ENCODE measurements at regions of chr4 and their contacts with region 1.

Region 1: GRCh38 chr4:173192375-173193162 is 24.0 kb downstream of the GALNT7 start:
- DNase-seq: no peak
- H3K4me3 Mint-ChIP-seq: no peak overlapping the region
- H3K27ac Mint-ChIP-seq: peak overlapping the region; percentile 78
- H3K4me1 Mint-ChIP-seq: peaks cover 37% of the 10 kb centered on the region
- H3K27me3 Mint-ChIP-seq: no peaks in the 10 kb centered on the region

Region 2: DNA sequence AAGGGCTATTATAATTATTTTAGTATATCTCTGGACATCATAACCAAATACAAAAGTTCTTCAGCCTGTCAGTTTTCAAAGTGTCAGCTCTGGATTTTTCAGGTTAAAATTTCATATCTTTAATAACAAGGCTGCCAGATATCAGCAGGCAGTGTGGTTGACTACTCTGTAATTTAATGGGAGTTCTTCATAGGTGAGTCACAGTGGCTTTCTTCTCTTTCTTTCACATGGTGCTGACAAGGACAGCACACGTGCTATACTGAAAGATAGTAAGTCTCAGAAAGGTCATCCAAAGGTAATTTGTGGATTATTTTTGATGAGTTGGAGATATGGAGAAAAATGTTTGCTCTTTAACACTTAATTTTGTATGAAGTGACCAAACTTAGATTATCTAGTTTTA is 19.3 kb after region 1 on chr4:
- intact Hi-C with region 1: loop called (anchors 2 kb)
- DNase-seq: no peak
- H3K4me3 Mint-ChIP-seq: no peak overlapping the region
- H3K27ac Mint-ChIP-seq: no peak overlapping the region
- H3K4me1 Mint-ChIP-seq: peaks cover 10% of the 10 kb centered on the region
- H3K27me3 Mint-ChIP-seq: peaks cover 1% of the 10 kb centered on the region

Measured in activated T-helper 2 cell treated with anti-CD3 and anti-CD28 coated beads, Interferon-gamma antibody, Interleukin-2, Interleukin-4, amounts not matched to agents 10 μg/mL and 5 μg/mL and 100 μg/mL, durations not matched to agents 14 hours and 24 hours and 36 hours (primary cell).